CD4-positive, alpha-beta memory T cell (primary cell): ENCODE measurements at regions of chr17 and their contacts with region 1.

Region 1: DNA sequence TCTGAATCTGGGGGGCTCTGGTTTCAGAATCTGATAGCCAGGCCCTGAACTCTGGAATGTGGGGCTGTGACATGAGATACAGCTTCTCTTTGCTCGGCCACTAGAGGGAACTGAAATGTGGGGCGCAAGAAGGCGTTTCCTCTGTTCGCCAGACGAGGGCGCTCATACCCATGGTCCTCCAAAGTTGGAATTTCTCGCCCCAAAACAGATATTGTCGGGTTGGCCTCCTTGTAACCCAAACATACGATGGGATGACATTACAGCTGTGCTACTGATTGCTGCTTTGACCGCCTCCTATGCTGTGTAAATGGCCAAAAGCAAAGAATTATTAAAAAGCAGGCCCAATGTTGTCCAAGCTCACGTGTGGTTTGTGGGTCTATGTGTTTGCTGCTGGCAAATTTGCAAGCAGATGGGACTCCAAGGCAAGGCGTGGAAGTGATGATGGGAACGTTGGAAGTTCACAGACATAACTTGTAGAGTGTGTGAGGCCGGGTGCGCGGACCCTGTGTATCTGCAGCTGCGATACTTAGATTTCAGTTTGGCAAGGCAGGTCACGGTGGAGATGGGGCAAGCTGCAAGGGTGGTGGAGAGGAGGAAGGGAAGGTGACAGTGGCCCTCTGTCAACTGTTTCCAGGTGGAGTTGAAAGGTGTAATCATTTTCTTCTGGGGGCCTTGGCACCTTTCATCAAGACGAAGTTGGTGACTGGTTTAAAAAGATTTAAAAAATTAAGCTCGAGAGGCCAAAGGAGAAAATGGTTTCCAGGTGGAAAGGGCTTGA is 13.0 kb upstream of the MSI2 start:
- DNase-seq: peak; percentile 71 to 75 (median 72)
- H3K4me3 ChIP-seq: no peak overlapping the region
- H3K4me3 Mint-ChIP-seq: no peak overlapping the region
- H3K27ac ChIP-seq: no peak overlapping the region
- H3K27ac Mint-ChIP-seq: peak overlapping the region in 1 of 7 donors; percentile 51
- H3K4me1 ChIP-seq: peaks cover 3% of the 10 kb centered on the region
- H3K4me1 Mint-ChIP-seq: peaks cover 0 to 7% (median 0%) of the 10 kb centered on the region in 4 donors
- H3K27me3 ChIP-seq: no peaks in the 10 kb centered on the region
- H3K27me3 Mint-ChIP-seq: peaks cover 3 to 7% of the 10 kb centered on the region in 2 donors

Region 2: DNA sequence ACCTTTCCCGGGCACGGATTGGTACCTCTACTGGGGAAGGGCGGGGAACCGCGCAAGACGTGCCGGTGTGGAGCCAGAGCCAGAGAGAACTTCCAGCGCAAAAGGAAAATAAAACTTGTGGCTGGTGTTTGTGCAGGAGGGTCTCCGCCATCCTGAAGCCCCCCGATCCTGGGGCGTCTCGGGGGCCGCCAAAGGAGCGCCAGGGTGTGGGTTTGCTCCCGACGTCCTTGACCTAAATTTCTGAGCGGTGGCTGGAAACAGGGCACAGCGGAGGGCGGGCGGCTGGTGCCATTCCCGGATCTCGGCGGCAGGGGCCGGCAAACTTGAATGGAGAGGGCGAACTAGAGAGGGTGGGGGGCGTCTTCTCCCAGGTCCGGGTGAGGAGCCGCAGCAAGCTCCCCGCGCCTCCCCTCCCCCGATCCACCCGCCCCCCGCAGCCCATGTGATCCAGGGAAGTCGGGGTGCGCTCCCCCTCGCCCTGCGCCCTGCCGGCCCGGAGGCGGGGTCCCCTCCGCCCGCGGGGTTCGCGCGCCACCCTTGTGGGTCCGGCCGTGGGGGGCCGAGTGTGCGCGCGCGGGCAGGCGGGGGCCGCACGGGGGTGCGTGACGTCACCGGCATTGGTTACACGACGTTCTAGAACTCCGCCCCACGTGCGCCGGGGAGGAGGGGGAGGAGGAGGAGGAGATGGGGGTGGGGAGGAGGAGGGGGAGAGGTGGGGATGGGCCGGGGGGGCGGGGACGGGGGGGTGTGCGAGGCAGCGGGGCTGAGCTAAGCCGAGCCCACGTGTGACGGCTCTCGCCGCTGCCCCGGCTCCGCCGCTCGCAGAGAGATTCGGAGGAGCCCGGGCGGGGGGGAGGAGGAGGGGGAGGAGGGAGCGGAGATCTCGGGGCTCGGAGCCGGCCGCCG is 12.7 kb after region 1 on chr17 and contains the start of gene MSI2:
- CTCF ChIA-PET with region 1: interaction called, 56 read pairs
- POLR2A ChIA-PET with region 1: interaction called, 10 read pairs
- intact Hi-C with region 1: loop called (anchors 1 kb)
- DNase-seq: peak; percentile 88 to 95 (median 89)
- H3K4me3 ChIP-seq: peak within 1 kb of the TSS; percentile 62 to 72
- H3K4me3 Mint-ChIP-seq: peak within 1 kb of the TSS; percentile 87 to 97 (median 94)
- H3K27ac ChIP-seq: peak within 1 kb of the TSS; percentile 77
- H3K27ac Mint-ChIP-seq: peak within 1 kb of the TSS; percentile 88 to 99 (median 94)
- H3K4me1 ChIP-seq: peaks cover 38% of the 10 kb centered on the region
- H3K4me1 Mint-ChIP-seq: peaks cover 34 to 62% (median 42%) of the 10 kb centered on the region in 4 donors
- H3K27me3 ChIP-seq: no peaks in the 10 kb centered on the region
- H3K27me3 Mint-ChIP-seq: no peaks in the 10 kb centered on the region
- total RNA-seq, gene MSI2: 107 to 110 TPM

Region 3: GRCh38 chr17:57294629-57295535 is 51.5 kb after region 1 on chr17:
- CTCF ChIA-PET with region 1: interaction called, 6 read pairs
- POLR2A ChIA-PET with region 1: no interaction called
- intact Hi-C with region 1: loop called (anchors 10 kb)
- DNase-seq: peak in 1 of 5 donors; percentile 42
- H3K4me3 ChIP-seq: no peak overlapping the region
- H3K4me3 Mint-ChIP-seq: peak overlapping the region in 3 of 8 donors; percentile 7 to 28 (median 14)
- H3K27ac ChIP-seq: no peak overlapping the region
- H3K27ac Mint-ChIP-seq: peak overlapping the region in 4 of 7 donors; percentile 4 to 65 (median 32)
- H3K4me1 ChIP-seq: peaks cover 15% of the 10 kb centered on the region
- H3K4me1 Mint-ChIP-seq: peaks cover 20 to 49% (median 28%) of the 10 kb centered on the region in 4 donors
- H3K27me3 ChIP-seq: no peaks in the 10 kb centered on the region
- H3K27me3 Mint-ChIP-seq: no peaks in the 10 kb centered on the region

Region 4: GRCh38 chr17:57597531-57598453 is 354.4 kb after region 1 on chr17:
- CTCF ChIA-PET with region 1: interaction called, 14 read pairs
- POLR2A ChIA-PET with region 1: interaction called, 4 read pairs
- intact Hi-C with region 1: no loop called
- DNase-seq: peak in 2 of 5 donors; percentile 16 to 21
- H3K4me3 ChIP-seq: no peak overlapping the region
- H3K4me3 Mint-ChIP-seq: peak overlapping the region in 3 of 8 donors; percentile 44 to 65 (median 61)
- H3K27ac ChIP-seq: no peak overlapping the region
- H3K27ac Mint-ChIP-seq: peak overlapping the region; percentile 53 to 96 (median 88)
- H3K4me1 ChIP-seq: peaks cover 54% of the 10 kb centered on the region
- H3K4me1 Mint-ChIP-seq: peaks cover 44 to 62% (median 51%) of the 10 kb centered on the region in 4 donors
- H3K27me3 ChIP-seq: no peaks in the 10 kb centered on the region
- H3K27me3 Mint-ChIP-seq: no peaks in the 10 kb centered on the region

Region 5: GRCh38 chr17:57783106-57783742 is 539.9 kb after region 1 on chr17:
- CTCF ChIA-PET with region 1: interaction called, 21 read pairs
- POLR2A ChIA-PET with region 1: no interaction called
- intact Hi-C with region 1: no loop called
- DNase-seq: peak; percentile 58 to 66 (median 64)
- H3K4me3 ChIP-seq: no peak overlapping the region
- H3K4me3 Mint-ChIP-seq: peak overlapping the region in 2 of 8 donors; percentile 2 to 23
- H3K27ac ChIP-seq: no peak overlapping the region
- H3K27ac Mint-ChIP-seq: no peak overlapping the region
- H3K4me1 ChIP-seq: peaks cover 11% of the 10 kb centered on the region
- H3K4me1 Mint-ChIP-seq: peaks cover 0 to 2% (median 0%) of the 10 kb centered on the region in 4 donors
- H3K27me3 ChIP-seq: peaks cover 8% of the 10 kb centered on the region
- H3K27me3 Mint-ChIP-seq: peaks cover 20 to 25% of the 10 kb centered on the region in 2 donors